ENCODE measurements at regions of chr7 and their contacts with region 1.

Region 1: GRCh38 chr7:79298145-79298760 is 155.2 kb downstream of the MAGI2 start:
- DNase-seq: peak; percentile 32
- H3K4me3 ChIP-seq: no peak overlapping the region
- H3K27ac ChIP-seq: no peak overlapping the region
- H3K4me1 ChIP-seq: no peaks in the 10 kb centered on the region
- CTCF ChIP-seq: peak; percentile 85

Region 2: GRCh38 chr7:79352323-79352722 is 54.1 kb after region 1 on chr7:
- CTCF ChIA-PET with region 1: no interaction called
- POLR2A ChIA-PET with region 1: no interaction called
- intact Hi-C with region 1: no loop called
- DNase-seq: no peak
- H3K4me3 ChIP-seq: no peak overlapping the region
- H3K27ac ChIP-seq: no peak overlapping the region
- H3K4me1 ChIP-seq: no peaks in the 10 kb centered on the region
- CTCF ChIP-seq: no peak

Region 3: DNA sequence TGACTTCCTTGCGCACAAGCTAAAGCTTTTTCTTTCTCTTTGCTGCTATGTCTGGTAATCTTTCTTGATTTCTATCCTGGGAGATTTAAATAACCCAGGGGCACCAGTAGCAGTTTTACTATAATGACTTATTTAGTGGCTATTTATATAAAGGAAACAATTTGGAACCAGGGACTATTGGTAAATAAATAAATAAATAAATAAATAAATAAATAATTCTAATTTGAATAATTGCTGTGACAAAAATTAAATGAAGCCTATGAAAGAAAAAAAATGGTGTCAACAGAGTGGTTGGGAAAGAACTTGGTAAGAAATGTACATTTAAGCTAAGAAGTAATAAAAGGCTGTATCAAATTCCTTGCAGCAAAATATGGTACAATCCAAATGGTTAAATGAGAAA is 265.9 kb after region 1 on chr7:
- CTCF ChIA-PET with region 1: no interaction called
- POLR2A ChIA-PET with region 1: no interaction called
- intact Hi-C with region 1: no loop called
- DNase-seq: no peak
- H3K4me3 ChIP-seq: no peak overlapping the region
- H3K27ac ChIP-seq: no peak overlapping the region
- H3K4me1 ChIP-seq: no peaks in the 10 kb centered on the region
- CTCF ChIP-seq: no peak

Region 4: GRCh38 chr7:80018941-80019752 is 720.9 kb after region 1 on chr7:
- CTCF ChIA-PET with region 1: no interaction called
- POLR2A ChIA-PET with region 1: no interaction called
- intact Hi-C with region 1: loop called (anchors 10 kb)
- DNase-seq: peak; percentile 53
- H3K4me3 ChIP-seq: no peak overlapping the region
- H3K27ac ChIP-seq: no peak overlapping the region
- H3K4me1 ChIP-seq: no peaks in the 10 kb centered on the region
- CTCF ChIP-seq: peak; percentile 95

Measured in OCI-LY7 (cell line).